ENCODE measurements at regions of chr1 and their contacts with region 1.

Region 1: DNA sequence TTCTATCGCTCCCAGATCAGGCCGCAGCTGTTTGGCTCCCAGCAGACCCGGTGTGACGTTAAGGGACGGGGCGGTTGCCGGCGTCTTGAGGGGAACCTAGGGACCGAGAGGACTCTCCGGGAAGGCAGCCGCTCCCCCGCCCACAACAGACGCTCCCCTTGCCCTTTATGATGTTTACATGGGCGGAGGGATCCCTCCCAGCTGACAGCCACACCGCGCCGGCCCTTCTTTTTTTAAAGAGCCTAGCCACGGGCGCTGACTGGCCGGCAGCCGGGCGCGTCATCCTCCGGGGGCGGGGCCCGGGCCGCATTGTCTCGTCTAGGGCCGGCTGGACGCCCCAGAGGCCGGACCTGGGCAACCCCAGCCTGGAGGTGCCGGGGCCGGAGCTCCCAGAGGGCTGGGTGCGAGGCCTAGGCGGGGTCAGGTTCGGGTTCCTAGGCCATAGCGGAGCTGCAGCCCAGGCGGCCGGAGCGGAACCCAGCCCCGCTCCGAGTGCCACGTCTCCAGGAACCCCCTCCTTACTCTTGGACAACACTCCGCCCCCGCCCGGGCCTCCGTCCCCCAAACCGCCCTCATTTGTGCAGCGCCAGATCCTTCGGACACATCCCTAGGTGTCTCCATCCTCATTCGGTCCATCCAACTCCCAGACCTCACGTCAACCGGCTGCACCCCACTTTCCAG is at the start of gene PCAT6:
- DNase-seq: peak; percentile 93
- ATAC-seq: peak; percentile 66
- H3K4me3 Mint-ChIP-seq: peak within 1 kb of the TSS; percentile 75
- H3K27ac Mint-ChIP-seq: peak within 1 kb of the TSS; percentile 68
- H3K4me1 Mint-ChIP-seq: peaks cover 32% of the 10 kb centered on the region
- H3K27me3 Mint-ChIP-seq: peaks cover 8% of the 10 kb centered on the region
- total RNA-seq, gene PCAT6: 0.59 to 2.2 TPM

Region 2: DNA sequence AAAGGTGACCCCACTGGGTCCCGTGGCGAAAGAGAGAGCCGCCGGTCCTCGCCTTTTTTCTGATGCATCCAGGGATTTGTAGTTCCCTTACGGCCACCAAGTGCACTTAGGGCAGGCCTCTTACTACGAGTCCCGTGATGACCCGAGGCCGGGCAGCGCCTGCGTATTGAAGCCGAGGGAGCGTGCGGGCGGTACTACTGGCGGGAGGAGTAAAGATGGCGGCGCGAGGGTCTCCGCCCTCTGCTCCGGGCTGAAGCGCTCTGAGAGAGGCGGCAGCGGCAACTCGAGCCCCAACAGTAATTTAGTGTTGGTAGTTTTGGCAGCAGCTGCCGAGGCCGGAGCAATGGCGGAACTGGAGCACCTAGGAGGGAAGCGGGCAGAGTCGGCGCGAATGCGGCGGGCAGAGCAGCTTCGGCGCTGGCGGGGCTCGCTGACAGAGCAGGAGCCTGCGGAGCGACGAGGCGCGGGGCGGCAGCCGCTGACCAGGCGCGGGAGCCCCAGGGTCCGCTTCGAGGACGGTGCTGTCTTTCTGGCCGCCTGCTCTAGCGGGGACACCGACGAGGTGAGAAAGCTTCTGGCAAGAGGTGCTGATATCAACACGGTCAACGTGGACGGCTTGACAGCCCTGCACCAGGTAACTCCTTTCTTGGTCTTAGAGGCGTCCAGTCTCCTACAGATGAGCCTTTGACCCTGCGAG is 462.1 kb before region 1 on chr1 and contains the start of gene PPP1R12B:
- CTCF ChIA-PET with region 1: no interaction called
- POLR2A ChIA-PET with region 1: no interaction called
- intact Hi-C with region 1: loop called (anchors 2 to 5 kb)
- DNase-seq: peak; percentile 97
- ATAC-seq: peak; percentile 99
- H3K4me3 Mint-ChIP-seq: peak within 1 kb of the TSS; percentile 76
- H3K27ac Mint-ChIP-seq: peak within 1 kb of the TSS; percentile 86
- H3K4me1 Mint-ChIP-seq: peaks cover 22% of the 10 kb centered on the region
- H3K27me3 Mint-ChIP-seq: no peaks in the 10 kb centered on the region
- total RNA-seq, gene PPP1R12B: 10.3 to 13.2 TPM

Region 3: GRCh38 chr1:202516434-202516877 is 294.3 kb before region 1 on chr1:
- CTCF ChIA-PET with region 1: no interaction called
- POLR2A ChIA-PET with region 1: no interaction called
- intact Hi-C with region 1: no loop called
- DNase-seq: no peak
- ATAC-seq: no peak
- H3K4me3 Mint-ChIP-seq: no peak overlapping the region
- H3K27ac Mint-ChIP-seq: no peak overlapping the region
- H3K4me1 Mint-ChIP-seq: no peaks in the 10 kb centered on the region
- H3K27me3 Mint-ChIP-seq: no peaks in the 10 kb centered on the region

Region 4: GRCh38 chr1:202888531-202889360 is 78.0 kb after region 1 on chr1 and contains the start of gene RABIF:
- CTCF ChIA-PET with region 1: no interaction called
- POLR2A ChIA-PET with region 1: no interaction called
- intact Hi-C with region 1: loop called (anchors 1 to 2 kb)
- DNase-seq: peak; percentile 98
- ATAC-seq: peak; percentile 94
- H3K4me3 Mint-ChIP-seq: peak within 1 kb of the TSS; percentile 91
- H3K27ac Mint-ChIP-seq: peak within 1 kb of the TSS; percentile 96
- H3K4me1 Mint-ChIP-seq: peaks cover 15% of the 10 kb centered on the region
- H3K27me3 Mint-ChIP-seq: no peaks in the 10 kb centered on the region
- total RNA-seq, gene RABIF: 6.8 to 7.4 TPM

Region 5: DNA sequence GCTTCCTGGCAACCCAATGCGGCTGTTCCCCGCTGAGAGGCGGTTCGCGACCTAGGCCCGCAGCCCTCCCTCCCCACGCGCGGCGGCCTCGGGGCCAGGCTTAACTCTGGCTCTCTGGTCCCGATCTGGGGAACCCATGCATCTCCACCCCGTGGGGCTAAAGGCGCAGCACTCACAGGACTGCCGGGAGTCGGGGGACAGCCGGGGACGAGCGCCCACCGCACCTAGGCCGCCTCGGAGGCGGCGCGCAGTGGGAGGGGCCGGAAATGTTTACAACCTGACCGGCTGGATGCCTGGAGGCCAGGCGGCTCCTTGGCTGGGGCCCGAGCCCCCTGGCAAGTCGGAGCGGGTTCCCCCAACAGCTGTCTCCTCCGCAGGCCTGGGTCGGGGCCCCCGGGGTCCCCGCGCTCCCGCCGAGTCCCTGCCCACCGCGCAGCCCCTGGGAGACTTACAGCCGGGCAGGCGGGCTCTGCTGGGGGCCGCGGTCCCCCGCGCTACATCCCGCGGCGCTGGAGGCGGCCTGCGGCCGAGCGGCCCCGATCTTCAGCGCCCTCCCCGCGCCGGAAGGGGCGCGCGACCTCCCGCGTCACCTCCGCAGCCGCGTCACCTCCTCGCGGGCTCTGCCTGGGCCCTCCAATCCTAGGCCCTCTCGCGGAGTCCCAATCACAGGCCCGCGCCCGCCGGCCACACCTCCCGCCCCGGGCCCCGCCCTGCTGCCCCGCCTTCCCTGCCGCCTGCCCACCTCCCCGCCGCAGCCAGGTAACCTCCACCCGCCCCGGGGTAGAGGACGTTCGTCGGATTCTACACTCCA is 147.2 kb after region 1 on chr1 and contains the start of gene ADIPOR1:
- CTCF ChIA-PET with region 1: no interaction called
- POLR2A ChIA-PET with region 1: no interaction called
- intact Hi-C with region 1: loop called in 1 of 2 experiments (anchors 1 kb)
- DNase-seq: peak; percentile 96
- ATAC-seq: peak; percentile 100
- H3K4me3 Mint-ChIP-seq: peak within 1 kb of the TSS; percentile 83
- H3K27ac Mint-ChIP-seq: peak within 1 kb of the TSS; percentile 82
- H3K4me1 Mint-ChIP-seq: peaks cover 46% of the 10 kb centered on the region
- H3K27me3 Mint-ChIP-seq: no peaks in the 10 kb centered on the region
- total RNA-seq, gene ADIPOR1: 65.4 to 85.1 TPM

Region 6: GRCh38 chr1:203006948-203007871 is 196.5 kb after region 1 on chr1 and contains the start of gene TMEM183A:
- CTCF ChIA-PET with region 1: interaction called, 3 read pairs
- POLR2A ChIA-PET with region 1: no interaction called
- intact Hi-C with region 1: loop called in 1 of 2 experiments (anchors 1 kb)
- DNase-seq: peak; percentile 98
- ATAC-seq: peak; percentile 96
- H3K4me3 Mint-ChIP-seq: peak within 1 kb of the TSS; percentile 99
- H3K27ac Mint-ChIP-seq: peak within 1 kb of the TSS; percentile 98
- H3K4me1 Mint-ChIP-seq: peaks cover 23% of the 10 kb centered on the region
- H3K27me3 Mint-ChIP-seq: no peaks in the 10 kb centered on the region
- total RNA-seq, gene TMEM183A: 68.6 to 71.0 TPM

Region 7: GRCh38 chr1:203290261-203291089 is 479.7 kb after region 1 on chr1:
- CTCF ChIA-PET with region 1: no interaction called
- POLR2A ChIA-PET with region 1: no interaction called
- intact Hi-C with region 1: loop called in 1 of 2 experiments (anchors 5 kb)
- DNase-seq: peak; percentile 99
- ATAC-seq: peak; percentile 50
- H3K4me3 Mint-ChIP-seq: peak overlapping the region; percentile 78
- H3K27ac Mint-ChIP-seq: peak overlapping the region; percentile 98
- H3K4me1 Mint-ChIP-seq: peaks cover 83% of the 10 kb centered on the region
- H3K27me3 Mint-ChIP-seq: no peaks in the 10 kb centered on the region

Region 8: DNA sequence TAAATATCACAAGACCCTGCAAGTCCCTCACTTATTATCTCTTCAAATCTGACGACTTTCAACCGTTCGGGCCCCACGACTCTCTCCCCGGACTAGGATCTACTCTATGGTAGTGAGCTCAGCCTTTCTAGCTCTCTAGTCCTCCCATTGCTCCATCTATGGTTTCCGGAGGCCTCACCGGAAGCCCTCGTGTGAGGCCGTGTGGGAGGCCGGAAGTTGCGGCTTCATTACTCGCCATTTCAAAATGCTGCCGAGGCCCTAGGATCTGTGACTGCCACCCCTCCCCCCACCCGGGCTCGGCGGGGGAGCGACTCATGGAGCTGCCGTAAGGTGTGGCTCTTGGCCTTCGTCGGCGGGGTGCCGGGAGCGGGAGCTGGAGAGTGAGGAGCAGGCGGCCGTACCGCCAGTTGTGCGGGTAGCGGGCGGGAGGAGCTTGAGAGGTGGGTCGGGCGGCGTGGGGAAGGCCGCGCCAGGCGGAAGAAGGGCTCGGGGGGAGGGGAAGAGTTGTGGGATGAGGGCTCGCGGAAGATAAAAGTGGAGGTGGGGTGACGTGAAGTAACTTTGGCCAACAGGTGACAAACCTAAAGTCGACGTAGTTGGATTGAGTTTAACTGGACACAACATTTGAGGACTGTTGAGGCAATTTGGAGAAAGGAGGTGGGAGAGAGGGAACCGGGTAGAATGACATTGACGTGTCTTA is 1705.6 kb after region 1 on chr1 and contains the start of gene MDM4:
- CTCF ChIA-PET with region 1: no interaction called
- POLR2A ChIA-PET with region 1: no interaction called
- intact Hi-C with region 1: loop called in 1 of 2 experiments (anchors 10 kb)
- DNase-seq: peak; percentile 98
- ATAC-seq: peak; percentile 85
- H3K4me3 Mint-ChIP-seq: no peak within 1 kb of the TSS
- H3K27ac Mint-ChIP-seq: no peak within 1 kb of the TSS
- H3K4me1 Mint-ChIP-seq: peaks cover 62% of the 10 kb centered on the region
- H3K27me3 Mint-ChIP-seq: no peaks in the 10 kb centered on the region
- total RNA-seq, gene MDM4: 89.1 to 94.6 TPM

Measured in activated CD4-positive, alpha-beta T cell treated with anti-CD3 and anti-CD28 coated beads for 36 hours (primary cell).